Heart right ventricle (tissue), 16 donors: ENCODE measurements at regions of chr1 and their contacts with region 1.

Region 1: GRCh38 chr1:181142096-181142958 is 53.8 kb downstream of the IER5 start:
- DNase-seq: peak; percentile 88 to 91
- ATAC-seq: peak; percentile 94 to 97 (median 96)
- H3K4me3 ChIP-seq: peak overlapping the region in 7 of 10 donors; percentile 1 to 50 (median 39)
- H3K27ac ChIP-seq: peak overlapping the region in 3 of 10 donors; percentile 31 to 68 (median 39)
- H3K4me1 ChIP-seq: peaks cover 16 to 49% (median 39%) of the 10 kb centered on the region in 9 donors
- H3K27me3 ChIP-seq: no peaks in the 10 kb centered on the region
- CTCF ChIP-seq: peak; percentile 91 to 99 (median 98)

Region 2: GRCh38 chr1:180515864-180516388 is 626.4 kb before region 1 on chr1:
- intact Hi-C with region 1: loop called in 2 of 10 experiments (anchors 10 kb)
- DNase-seq: peak in 1 of 2 donors; percentile 72
- ATAC-seq: peak; percentile 91 to 97 (median 96)
- H3K4me3 ChIP-seq: no peak overlapping the region
- H3K27ac ChIP-seq: peak overlapping the region in 6 of 10 donors; percentile 16 to 36 (median 30)
- H3K4me1 ChIP-seq: peaks cover 0 to 31% (median 14%) of the 10 kb centered on the region in 9 donors
- H3K27me3 ChIP-seq: no peaks in the 10 kb centered on the region
- CTCF ChIP-seq: peak; percentile 67 to 92 (median 85)

Region 3: DNA sequence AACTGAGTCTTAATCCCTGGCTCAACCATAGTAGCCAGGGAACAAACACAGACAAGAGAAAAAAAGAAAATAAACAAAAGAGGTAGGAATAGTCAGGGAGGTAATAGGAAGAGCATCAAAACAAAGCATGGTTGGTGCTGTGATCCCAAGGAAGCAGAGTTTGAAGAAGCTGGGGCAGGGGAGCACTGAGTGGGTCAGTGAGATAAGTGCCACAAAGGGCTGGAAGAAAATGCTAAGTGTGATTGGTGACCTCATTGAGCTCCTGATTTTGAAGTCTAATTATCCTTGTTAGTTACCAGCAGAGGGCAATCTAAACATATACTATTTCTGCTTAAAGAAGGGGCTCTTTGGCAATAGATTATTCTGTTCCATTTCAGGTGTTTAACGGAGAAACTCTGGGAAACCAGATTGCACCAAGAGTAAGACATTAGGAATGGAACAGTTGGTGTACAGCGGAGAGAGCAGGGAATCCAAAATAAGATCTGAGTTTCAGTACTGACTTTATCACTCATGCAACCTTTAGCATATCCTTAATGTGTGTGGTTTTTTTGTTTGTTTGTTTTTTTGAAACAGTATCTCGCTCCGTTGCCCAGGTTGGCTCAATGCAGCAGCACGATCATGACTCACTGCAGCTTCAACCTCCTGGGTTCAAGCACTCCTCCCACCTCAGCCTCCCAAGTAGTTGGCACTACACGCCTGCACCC is 260.4 kb before region 1 on chr1:
- intact Hi-C with region 1: loop called in 7 of 10 experiments (anchors 2 to 10 kb)
- DNase-seq: no peak
- ATAC-seq: peak; percentile 47 to 69 (median 59)
- H3K4me3 ChIP-seq: no peak overlapping the region
- H3K27ac ChIP-seq: peak overlapping the region in 1 of 10 donors; percentile 2
- H3K4me1 ChIP-seq: peaks cover 0 to 19% (median 4%) of the 10 kb centered on the region in 9 donors
- H3K27me3 ChIP-seq: no peaks in the 10 kb centered on the region
- CTCF ChIP-seq: peak in 8 of 9 donors; percentile 36 to 70 (median 54)

Region 4: DNA sequence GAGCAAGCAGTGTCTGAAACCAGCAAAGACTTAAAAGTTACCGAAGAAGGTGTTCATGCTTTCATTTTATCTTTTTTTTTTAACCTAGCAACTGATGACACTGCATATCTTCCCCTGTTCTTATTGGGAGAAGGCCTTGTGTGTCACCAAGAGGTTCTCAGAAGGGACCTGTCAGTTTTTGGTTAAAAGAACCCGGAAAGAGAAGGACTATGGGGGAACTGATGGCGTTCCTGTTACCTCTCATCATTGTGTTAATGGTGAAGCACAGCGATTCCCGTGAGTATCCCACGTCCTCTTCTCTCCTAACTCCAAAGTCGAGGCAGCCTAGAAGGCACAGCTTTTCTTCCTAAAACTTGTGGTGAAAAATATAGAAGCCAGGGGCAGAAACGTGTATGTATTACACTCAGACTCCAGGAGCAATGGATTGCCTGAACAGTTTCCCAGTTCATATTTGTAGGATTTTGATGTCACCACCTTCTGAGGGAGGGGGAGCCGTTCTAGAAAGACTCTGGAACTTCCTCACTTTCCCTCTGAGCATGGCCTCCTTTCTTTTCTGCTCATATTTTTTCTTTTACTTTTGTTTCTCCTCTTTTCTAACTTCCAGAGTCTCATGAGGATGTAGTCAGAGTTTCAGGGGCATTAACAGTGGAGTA is 108.4 kb before region 1 on chr1 and contains the start of gene MR1:
- intact Hi-C with region 1: loop called in 9 of 10 experiments (anchors 1 to 5 kb)
- DNase-seq: peak in 1 of 2 donors; percentile 45
- ATAC-seq: peak; percentile 81 to 97 (median 94)
- H3K4me3 ChIP-seq: peak within 1 kb of the TSS in 9 of 10 donors; percentile 41 to 68 (median 50)
- H3K27ac ChIP-seq: peak within 1 kb of the TSS; percentile 75 to 99 (median 84)
- H3K4me1 ChIP-seq: peaks cover 6 to 63% (median 19%) of the 10 kb centered on the region in 9 donors
- H3K27me3 ChIP-seq: no peaks in the 10 kb centered on the region
- CTCF ChIP-seq: no peak
- total RNA-seq, gene MR1: 1.8 to 8.2 (median 3.2) TPM

Region 5: GRCh38 chr1:181062836-181063428 is 79.4 kb before region 1 on chr1:
- intact Hi-C with region 1: no loop called
- DNase-seq: no peak
- ATAC-seq: peak in 5 of 8 donors; percentile 35 to 67 (median 48)
- H3K4me3 ChIP-seq: peak overlapping the region in 1 of 10 donors; percentile 16
- H3K27ac ChIP-seq: peak overlapping the region in 2 of 10 donors; percentile 40 to 77
- H3K4me1 ChIP-seq: peaks cover 0 to 35% (median 13%) of the 10 kb centered on the region in 9 donors
- H3K27me3 ChIP-seq: no peaks in the 10 kb centered on the region
- CTCF ChIP-seq: no peak

Region 6: DNA sequence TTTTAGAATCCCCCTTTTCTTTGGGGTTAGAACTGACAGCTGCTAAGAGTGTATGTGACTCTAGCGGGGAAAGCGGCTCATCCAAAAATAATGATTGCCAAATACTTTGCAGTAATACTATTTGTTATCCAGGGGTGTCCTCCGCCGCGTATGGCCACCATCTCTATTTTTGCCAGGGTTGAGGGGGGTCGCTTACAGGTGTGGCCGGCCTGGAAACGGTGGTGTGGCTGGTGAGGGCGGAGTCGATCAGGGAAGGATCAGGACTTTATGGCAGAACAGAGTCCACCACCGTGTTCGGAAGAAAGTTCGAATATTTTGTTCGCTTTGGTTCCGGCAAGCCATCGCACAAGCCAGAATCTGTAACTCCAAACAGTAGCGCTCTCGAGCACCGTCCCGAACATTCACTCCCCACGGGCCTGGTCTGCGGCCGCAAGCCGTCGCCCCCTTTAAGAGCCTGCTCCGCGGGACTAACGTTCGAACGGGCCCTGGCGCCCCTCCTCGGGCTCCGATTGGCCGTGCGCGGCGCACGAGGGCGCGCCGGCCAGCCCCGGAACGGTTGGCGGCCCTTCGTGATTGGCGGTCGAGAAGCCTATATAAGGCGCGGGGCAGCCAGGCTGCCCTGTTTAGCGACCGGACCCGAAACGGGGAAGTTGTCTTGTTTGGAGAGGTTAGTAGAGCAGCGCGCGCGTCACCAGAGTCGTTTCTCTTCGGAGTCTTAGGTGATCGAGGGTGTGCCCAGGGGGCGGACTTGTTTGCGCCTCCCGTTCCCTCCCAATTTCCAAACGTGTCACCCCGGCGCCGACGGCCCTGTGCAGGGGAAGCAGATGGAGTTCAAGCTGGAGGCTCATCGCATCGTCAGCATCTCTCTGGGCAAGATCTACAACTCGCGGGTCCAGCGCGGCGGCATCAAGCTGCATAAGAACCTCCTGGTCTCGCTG is 54.0 kb before region 1 on chr1 and contains the start of gene IER5:
- intact Hi-C with region 1: loop called (anchors 1 to 5 kb)
- DNase-seq: peak; percentile 93 to 98
- ATAC-seq: peak; percentile 92 to 96 (median 94)
- H3K4me3 ChIP-seq: peak within 1 kb of the TSS; percentile 65 to 94 (median 84)
- H3K27ac ChIP-seq: peak within 1 kb of the TSS; percentile 89 to 97 (median 94)
- H3K4me1 ChIP-seq: peaks cover 0 to 56% (median 36%) of the 10 kb centered on the region in 9 donors
- H3K27me3 ChIP-seq: no peaks in the 10 kb centered on the region
- CTCF ChIP-seq: peak in 3 of 9 donors; percentile 7 to 28 (median 15)
- total RNA-seq, gene IER5: 10.7 to 87.5 (median 18.7) TPM

Region 7: DNA sequence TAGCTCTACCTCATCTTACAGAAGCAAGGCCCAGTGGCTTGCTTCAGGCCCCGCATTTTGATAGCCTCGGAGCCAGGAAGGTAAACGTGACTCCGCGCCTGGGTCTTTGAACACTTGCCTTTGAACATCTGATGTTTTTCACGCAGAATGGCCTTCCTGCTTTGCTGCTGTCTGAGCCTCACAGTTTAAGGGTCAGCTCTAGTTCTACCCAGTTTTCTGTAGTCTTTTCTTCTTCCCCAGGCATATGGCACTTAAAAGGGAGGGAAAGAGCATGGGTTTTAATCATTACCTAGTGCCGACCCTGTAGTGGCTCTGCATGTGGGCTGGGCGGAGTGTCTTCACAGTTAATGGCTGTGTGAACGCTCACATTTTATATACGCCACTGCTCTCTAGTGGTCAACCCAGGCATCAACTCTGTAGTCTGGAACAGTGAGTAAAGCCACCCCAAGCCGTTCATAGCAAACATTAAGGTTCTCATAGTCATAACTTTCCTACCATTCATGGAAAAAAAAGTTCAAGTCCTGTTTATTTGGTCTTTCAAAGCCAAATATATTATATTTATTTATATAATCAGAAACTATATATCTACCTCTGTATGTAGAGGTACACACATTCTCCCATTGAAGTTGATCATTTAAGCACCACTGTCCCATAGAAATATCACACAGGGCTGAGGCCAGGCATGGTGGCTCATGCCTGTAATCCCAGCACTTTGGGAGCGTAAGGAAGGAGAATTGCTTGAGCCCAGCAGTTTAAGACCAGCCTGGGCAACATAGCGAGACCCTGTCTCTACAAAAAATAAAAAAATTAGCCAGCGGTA is 24.3 kb after region 1 on chr1:
- intact Hi-C with region 1: loop called in 2 of 10 experiments (anchors 2 kb)
- DNase-seq: peak in 1 of 2 donors; percentile 75
- ATAC-seq: peak; percentile 93 to 98 (median 96)
- H3K4me3 ChIP-seq: no peak overlapping the region
- H3K27ac ChIP-seq: no peak overlapping the region
- H3K4me1 ChIP-seq: peaks cover 0 to 7% (median 2%) of the 10 kb centered on the region in 9 donors
- H3K27me3 ChIP-seq: no peaks in the 10 kb centered on the region
- CTCF ChIP-seq: peak; percentile 84 to 93 (median 88)

Region 8: DNA sequence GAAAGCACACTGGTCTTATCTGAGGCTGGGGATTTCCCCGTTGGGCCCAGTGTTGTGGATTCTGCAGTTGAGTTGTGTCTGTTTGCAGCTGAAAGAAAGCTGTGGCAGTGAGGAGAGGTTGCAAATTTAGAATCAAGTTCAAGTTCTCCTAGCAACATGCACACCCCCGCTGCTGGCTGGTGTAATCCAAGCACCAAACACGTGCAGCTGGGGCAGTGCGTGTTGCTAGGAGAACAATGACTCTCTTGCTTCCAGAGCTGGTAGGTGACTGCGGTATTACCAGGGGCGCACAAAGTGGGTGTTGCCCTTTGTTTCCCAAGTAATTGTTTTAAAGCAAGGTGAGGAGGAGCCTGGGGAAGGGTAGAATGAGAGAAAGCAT is 37.6 kb after region 1 on chr1:
- intact Hi-C with region 1: no loop called
- DNase-seq: peak; percentile 58 to 81
- ATAC-seq: peak; percentile 75 to 91 (median 88)
- H3K4me3 ChIP-seq: no peak overlapping the region
- H3K27ac ChIP-seq: peak overlapping the region in 7 of 10 donors; percentile 53 to 81 (median 66)
- H3K4me1 ChIP-seq: peaks cover 0 to 47% (median 17%) of the 10 kb centered on the region in 9 donors
- H3K27me3 ChIP-seq: peaks cover 0 to 7% (median 0%) of the 10 kb centered on the region in 7 donors
- CTCF ChIP-seq: no peak